ENCODE measurements at regions of chr5 and their contacts with region 1.

Region 1: DNA sequence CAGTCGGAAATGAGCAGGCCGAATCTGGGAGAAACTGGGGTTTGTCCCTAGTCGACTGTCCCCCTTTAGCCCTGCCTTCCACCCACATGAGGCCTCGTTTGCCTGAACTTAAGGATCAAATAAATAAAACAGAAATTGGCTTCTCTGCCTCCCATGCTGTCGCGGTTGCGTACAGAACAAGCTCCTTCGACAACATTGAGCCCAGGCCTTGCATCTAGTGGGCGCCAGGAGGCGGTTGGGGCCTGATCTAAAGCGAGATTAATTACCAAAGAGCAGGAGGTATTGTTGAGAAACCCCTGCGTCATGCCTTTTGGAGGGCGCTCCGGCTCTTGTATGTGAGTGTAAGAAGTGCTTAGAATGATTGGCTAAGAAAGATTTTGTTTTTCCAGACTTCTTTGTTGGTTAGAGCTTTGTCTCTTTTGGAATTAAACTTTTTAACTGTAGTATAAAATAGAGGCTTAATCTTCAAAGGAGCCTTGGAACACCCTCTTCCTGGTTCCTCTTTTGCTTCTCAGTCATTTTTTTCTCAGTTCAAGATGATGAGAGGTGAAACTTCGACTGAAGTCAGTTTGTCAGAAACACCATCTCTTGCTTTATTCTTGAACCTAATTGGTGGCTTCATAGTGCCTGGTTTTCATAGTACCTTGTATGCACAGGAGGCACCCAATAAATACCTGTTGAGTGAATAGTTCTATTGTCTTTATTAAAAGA is 827 bp downstream of the ATP6V0E1 start:
- DNase-seq: peak; percentile 56
- ATAC-seq: peak; percentile 88
- H3K4me3 ChIP-seq: peak overlapping the region; percentile 99
- H3K27ac ChIP-seq: peak overlapping the region; percentile 98
- H3K4me1 ChIP-seq: peaks cover 3% of the 10 kb centered on the region; the same call in 1 of the 2 replicates
- H3K27me3 ChIP-seq: no peaks in the 10 kb centered on the region
- CTCF ChIP-seq: peak; percentile 57 to 80 (median 74)
- EP300 ChIP-seq: no peak
- POLR2A ChIP-seq: no peak
- RAD21 ChIP-seq: peak; percentile 82

Region 2: DNA sequence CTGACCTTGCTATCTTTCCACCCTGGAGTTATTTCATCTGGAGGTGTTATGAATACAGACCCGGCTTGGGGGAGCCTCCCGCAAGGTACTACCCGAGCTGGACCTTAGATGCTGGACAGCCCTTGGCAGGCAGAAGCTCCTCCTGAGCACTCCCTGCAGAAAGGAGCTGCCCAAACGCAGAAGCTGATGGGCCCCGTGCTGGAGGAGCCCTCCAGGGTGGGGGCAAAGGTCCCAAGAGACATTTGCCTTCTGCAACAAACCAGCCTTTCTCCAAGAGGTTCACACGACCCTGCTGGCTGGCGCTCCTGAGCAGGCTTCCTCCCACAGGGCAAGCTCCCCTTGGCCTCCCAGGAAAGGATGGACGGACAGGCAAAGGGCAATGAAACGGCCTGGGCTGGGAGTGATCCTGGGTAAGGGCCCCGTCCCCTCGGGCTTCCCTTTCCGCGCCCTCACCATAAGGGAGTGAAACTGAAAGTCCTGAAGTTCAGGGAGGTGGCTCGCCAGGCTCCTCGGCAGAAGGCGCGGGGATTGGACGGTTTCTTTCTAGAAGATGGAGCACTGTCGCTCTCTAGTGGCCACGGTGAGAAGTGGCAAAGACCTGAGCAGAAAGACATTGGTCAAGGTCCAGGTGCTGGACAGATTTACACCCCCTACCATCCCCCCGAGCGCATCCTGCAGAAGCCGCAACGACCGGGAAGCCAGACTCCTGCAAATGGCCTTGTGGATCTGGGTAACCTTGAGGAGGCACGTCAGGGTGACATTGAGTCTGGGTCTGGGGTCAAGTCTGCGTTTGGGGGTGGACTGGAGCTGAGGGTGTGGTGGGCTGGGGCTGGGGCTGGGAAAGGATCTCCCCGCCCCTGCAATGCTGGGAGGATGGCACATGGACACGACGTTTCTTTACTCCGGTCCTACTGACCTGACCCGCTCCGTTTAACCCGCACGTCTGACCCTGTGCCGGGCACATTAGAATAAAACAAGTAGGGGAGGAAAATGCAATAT is 287.0 kb before region 1 on chr5:
- CTCF ChIA-PET with region 1: no interaction called
- POLR2A ChIA-PET with region 1: no interaction called
- RAD21 ChIA-PET with region 1: no interaction called
- SMC1A ChIA-PET with region 1: no interaction called
- in situ Hi-C with region 1: no loop called
- intact Hi-C with region 1: no loop called
- DNase-seq: peak; percentile 33
- ATAC-seq: peak; percentile 94
- H3K4me3 ChIP-seq: peak overlapping the region; percentile 75
- H3K27ac ChIP-seq: 0 out of 2 replicates have a peak overlapping the region, but pooled peaks have one; percentile 16
- H3K4me1 ChIP-seq: peaks cover 7% of the 10 kb centered on the region
- H3K27me3 ChIP-seq: no peaks in the 10 kb centered on the region; a peak in 2 of 4 replicates
- CTCF ChIP-seq: peak; percentile 89 to 98 (median 91)
- EP300 ChIP-seq: no peak
- POLR2A ChIP-seq: peak; percentile 65
- RAD21 ChIP-seq: peak; percentile 92

Region 3: GRCh38 chr5:172777881-172778814 is 206.2 kb before region 1 on chr5:
- CTCF ChIA-PET with region 1: no interaction called
- POLR2A ChIA-PET with region 1: no interaction called
- RAD21 ChIA-PET with region 1: no interaction called
- SMC1A ChIA-PET with region 1: no interaction called
- in situ Hi-C with region 1: no loop called
- intact Hi-C with region 1: no loop called
- DNase-seq: no peak
- ATAC-seq: peak; percentile 49
- H3K4me3 ChIP-seq: peak overlapping the region; percentile 34
- H3K27ac ChIP-seq: peak overlapping the region; percentile 93
- H3K4me1 ChIP-seq: peaks cover 21% of the 10 kb centered on the region
- H3K27me3 ChIP-seq: no peaks in the 10 kb centered on the region
- CTCF ChIP-seq: no peak
- EP300 ChIP-seq: no peak
- POLR2A ChIP-seq: no peak
- RAD21 ChIP-seq: no peak

Region 4: GRCh38 chr5:173035904-173036707 is 51.7 kb after region 1 on chr5:
- CTCF ChIA-PET with region 1: interaction called, 33 read pairs
- POLR2A ChIA-PET with region 1: interaction called, 24 read pairs
- RAD21 ChIA-PET with region 1: interaction called, 46 read pairs
- SMC1A ChIA-PET with region 1: interaction called, 38 read pairs
- in situ Hi-C with region 1: no loop called
- intact Hi-C with region 1: loop called (anchors 1 kb)
- DNase-seq: peak; percentile 88
- ATAC-seq: peak; percentile 85
- H3K4me3 ChIP-seq: peak overlapping the region; percentile 65
- H3K27ac ChIP-seq: peak overlapping the region; percentile 89
- H3K4me1 ChIP-seq: peaks cover 29% of the 10 kb centered on the region
- H3K27me3 ChIP-seq: no peaks in the 10 kb centered on the region
- CTCF ChIP-seq: no peak
- EP300 ChIP-seq: peak in 1 of 2 experiments; percentile 59; a peak in 2 of 4 replicates
- POLR2A ChIP-seq: peak; percentile 53
- RAD21 ChIP-seq: no peak

Region 5: DNA sequence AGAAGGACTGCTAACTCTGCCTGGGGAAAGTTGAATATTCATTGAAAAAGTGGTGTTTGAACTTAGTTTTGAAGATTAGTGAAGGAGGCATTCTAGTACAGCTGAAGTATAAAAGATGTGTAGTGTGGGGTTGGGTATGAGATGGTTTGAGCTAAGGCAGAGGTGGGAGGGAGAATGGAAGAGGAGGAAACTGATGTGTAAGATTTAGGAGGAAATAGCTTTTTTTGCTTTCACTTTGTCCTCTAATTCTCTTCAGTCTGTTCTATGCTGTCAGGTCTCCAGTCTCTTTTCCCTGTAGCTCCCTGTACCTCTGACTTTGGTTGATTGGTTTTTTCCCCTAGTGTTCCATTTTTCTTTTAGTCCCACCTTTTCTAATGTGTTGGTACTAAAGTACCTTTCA is 80.8 kb after region 1 on chr5:
- CTCF ChIA-PET with region 1: interaction called, 14 read pairs
- POLR2A ChIA-PET with region 1: interaction called, 4 read pairs
- RAD21 ChIA-PET with region 1: interaction called, 8 read pairs
- SMC1A ChIA-PET with region 1: interaction called, 22 read pairs
- in situ Hi-C with region 1: no loop called
- intact Hi-C with region 1: no loop called
- DNase-seq: no peak
- ATAC-seq: peak; percentile 87
- H3K4me3 ChIP-seq: peak overlapping the region; percentile 43
- H3K27ac ChIP-seq: no peak overlapping the region
- H3K4me1 ChIP-seq: no peaks in the 10 kb centered on the region; the same call in 1 of the 2 replicates
- H3K27me3 ChIP-seq: no peaks in the 10 kb centered on the region
- CTCF ChIP-seq: no peak
- EP300 ChIP-seq: no peak
- POLR2A ChIP-seq: no peak
- RAD21 ChIP-seq: no peak

Region 6: GRCh38 chr5:173204185-173204979 is 220.0 kb after region 1 on chr5:
- CTCF ChIA-PET with region 1: interaction called, 7 read pairs
- POLR2A ChIA-PET with region 1: no interaction called
- RAD21 ChIA-PET with region 1: interaction called, 6 read pairs
- SMC1A ChIA-PET with region 1: interaction called, 4 read pairs
- in situ Hi-C with region 1: loop called (anchors 5 kb)
- intact Hi-C with region 1: no loop called
- DNase-seq: no peak
- ATAC-seq: peak; percentile 63
- H3K4me3 ChIP-seq: no peak overlapping the region
- H3K27ac ChIP-seq: no peak overlapping the region
- H3K4me1 ChIP-seq: no peaks in the 10 kb centered on the region
- H3K27me3 ChIP-seq: no peaks in the 10 kb centered on the region
- CTCF ChIP-seq: peak; percentile 42 to 60 (median 52); a peak in 5 of 6 replicates
- EP300 ChIP-seq: no peak
- POLR2A ChIP-seq: no peak
- RAD21 ChIP-seq: peak; percentile 73

Region 7: GRCh38 chr5:173331956-173332479 is 347.6 kb after region 1 on chr5:
- CTCF ChIA-PET with region 1: interaction called, 22 read pairs
- POLR2A ChIA-PET with region 1: no interaction called
- RAD21 ChIA-PET with region 1: interaction called, 4 read pairs
- SMC1A ChIA-PET with region 1: interaction called, 3 read pairs
- in situ Hi-C with region 1: loop called (anchors 5 kb)
- intact Hi-C with region 1: no loop called
- DNase-seq: peak; percentile 42
- ATAC-seq: peak; percentile 98
- H3K4me3 ChIP-seq: no peak overlapping the region
- H3K27ac ChIP-seq: no peak overlapping the region
- H3K4me1 ChIP-seq: no peaks in the 10 kb centered on the region; the same call in 1 of the 2 replicates
- H3K27me3 ChIP-seq: peaks cover 0 to 2% of the 10 kb centered on the region in 2 experiments; a peak in 2 of 4 replicates
- CTCF ChIP-seq: peak; percentile 88 to 94 (median 92)
- EP300 ChIP-seq: no peak
- POLR2A ChIP-seq: no peak
- RAD21 ChIP-seq: peak; percentile 88

Region 8: DNA sequence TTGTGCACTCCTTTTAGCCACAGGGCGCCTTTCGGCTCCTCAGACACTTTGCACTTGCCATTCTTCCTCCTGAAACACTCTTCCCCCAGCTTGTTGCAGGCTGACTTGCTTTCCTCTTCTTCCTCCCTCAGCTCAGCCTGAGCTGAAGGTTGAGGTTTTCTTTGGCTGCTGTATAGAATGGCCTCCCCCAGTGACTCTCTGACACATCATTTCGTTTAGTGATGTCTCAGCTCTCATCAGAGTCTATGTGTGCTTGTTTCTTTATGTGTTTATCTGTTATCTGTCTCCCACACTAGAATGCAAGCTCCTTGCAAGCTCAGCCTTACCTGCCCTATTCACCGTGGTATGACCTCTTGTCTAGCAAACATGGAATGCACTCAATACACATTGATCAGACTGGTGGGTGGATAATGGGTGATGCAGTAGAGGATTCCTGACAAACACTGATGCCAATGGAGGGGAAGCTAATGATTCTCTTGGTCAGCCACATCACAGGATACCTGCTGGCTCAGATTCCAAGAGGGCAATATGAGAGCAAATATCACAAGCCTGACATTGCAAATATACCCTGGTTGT is 456.7 kb after region 1 on chr5:
- CTCF ChIA-PET with region 1: no interaction called
- POLR2A ChIA-PET with region 1: no interaction called
- RAD21 ChIA-PET with region 1: no interaction called
- SMC1A ChIA-PET with region 1: no interaction called
- in situ Hi-C with region 1: no loop called
- intact Hi-C with region 1: no loop called
- DNase-seq: no peak
- ATAC-seq: no peak
- H3K4me3 ChIP-seq: no peak overlapping the region
- H3K27ac ChIP-seq: no peak overlapping the region
- H3K4me1 ChIP-seq: no peaks in the 10 kb centered on the region
- H3K27me3 ChIP-seq: no peaks in the 10 kb centered on the region; a peak in 1 of 4 replicates
- CTCF ChIP-seq: no peak
- EP300 ChIP-seq: no peak
- POLR2A ChIP-seq: no peak
- RAD21 ChIP-seq: no peak

Region 9: GRCh38 chr5:173498286-173498685 is 513.9 kb after region 1 on chr5:
- CTCF ChIA-PET with region 1: no interaction called
- POLR2A ChIA-PET with region 1: no interaction called
- RAD21 ChIA-PET with region 1: no interaction called
- SMC1A ChIA-PET with region 1: no interaction called
- in situ Hi-C with region 1: no loop called
- intact Hi-C with region 1: no loop called
- DNase-seq: no peak
- ATAC-seq: no peak
- H3K4me3 ChIP-seq: no peak overlapping the region
- H3K27ac ChIP-seq: no peak overlapping the region
- H3K4me1 ChIP-seq: no peaks in the 10 kb centered on the region
- H3K27me3 ChIP-seq: peaks cover 0 to 3% of the 10 kb centered on the region in 2 experiments
- CTCF ChIP-seq: no peak
- EP300 ChIP-seq: no peak
- POLR2A ChIP-seq: no peak
- RAD21 ChIP-seq: no peak